Activated B cell treated with CpG ODN at 0.5 μM for 24 hours (primary cell): ENCODE measurements at regions of chr5 and their contacts with region 1.

Region 1: DNA sequence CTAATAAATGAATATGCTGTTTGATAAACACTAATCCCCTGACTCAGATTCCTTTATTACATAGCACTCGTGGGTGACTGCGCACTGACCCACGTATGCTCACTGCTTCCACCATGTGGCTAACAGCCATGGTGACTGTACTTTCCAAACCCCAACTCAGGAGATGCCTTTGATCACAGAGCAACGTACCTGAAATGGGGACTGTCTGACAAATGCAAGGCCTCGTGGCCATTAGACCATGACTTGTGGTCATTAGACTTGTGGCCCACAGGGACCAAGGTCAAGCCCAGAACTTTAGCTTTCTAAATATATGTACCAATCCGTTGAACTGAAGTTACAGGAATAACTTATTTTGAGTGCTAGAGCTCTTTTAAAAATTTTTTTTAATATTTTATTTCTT is 46.6 kb downstream of the CYFIP2 start:
- DNase-seq: no peak
- ATAC-seq: peak; percentile 77
- H3K4me3 Mint-ChIP-seq: no peak overlapping the region
- H3K27ac Mint-ChIP-seq: peak overlapping the region; percentile 77
- H3K4me1 Mint-ChIP-seq: peaks cover 35% of the 10 kb centered on the region
- H3K27me3 Mint-ChIP-seq: no peaks in the 10 kb centered on the region
- CTCF ChIP-seq: peak; percentile 42

Region 2: DNA sequence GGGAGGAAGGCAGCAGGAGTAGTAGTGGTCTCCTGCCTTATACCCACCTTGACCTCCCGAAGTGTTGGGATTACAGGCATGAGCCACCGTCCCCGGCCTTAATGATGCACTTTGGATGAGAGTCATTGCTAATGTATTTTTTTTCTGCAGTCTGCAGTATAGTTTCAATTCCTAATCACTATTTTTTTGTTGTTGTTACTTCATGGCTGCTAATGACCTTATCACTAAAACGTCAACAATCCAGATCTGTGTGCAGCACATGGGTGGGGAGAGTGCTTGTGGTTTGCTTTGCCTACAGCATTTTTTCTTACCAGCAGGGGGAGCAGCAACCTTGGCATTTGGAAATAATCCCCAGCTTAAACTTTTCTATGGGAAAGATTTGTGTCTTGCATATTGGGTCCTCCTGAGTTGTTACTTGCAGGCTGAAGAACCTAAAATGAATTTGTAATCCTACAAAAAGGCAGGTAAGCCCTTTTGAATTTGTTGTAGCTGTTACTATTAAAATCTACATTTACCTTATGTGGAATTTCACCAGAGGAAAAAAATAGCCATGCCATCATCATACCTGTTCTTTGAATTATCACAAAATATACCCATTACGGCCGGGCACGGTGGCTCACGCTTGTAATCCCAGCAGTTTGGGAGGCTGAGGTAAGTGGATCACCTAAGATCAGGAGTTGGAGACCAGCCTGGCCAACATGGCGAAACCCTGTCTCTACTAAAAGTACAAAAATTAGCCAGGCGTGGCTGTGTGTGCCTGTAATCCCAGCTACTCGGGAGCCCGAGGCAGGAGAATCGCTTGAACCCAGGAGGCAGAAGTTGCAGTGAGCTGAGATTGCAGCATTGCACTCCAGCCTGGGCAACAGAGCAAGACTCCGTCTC is 163.5 kb before region 1 on chr5:
- CTCF ChIA-PET with region 1: interaction called, 24 read pairs
- POLR2A ChIA-PET with region 1: interaction called, 16 read pairs
- intact Hi-C with region 1: loop called (anchors 1 kb)
- DNase-seq: no peak
- ATAC-seq: peak; percentile 81
- H3K4me3 Mint-ChIP-seq: no peak overlapping the region
- H3K27ac Mint-ChIP-seq: no peak overlapping the region
- H3K4me1 Mint-ChIP-seq: peaks cover 8% of the 10 kb centered on the region
- H3K27me3 Mint-ChIP-seq: no peaks in the 10 kb centered on the region
- CTCF ChIP-seq: peak; percentile 45

Region 3: DNA sequence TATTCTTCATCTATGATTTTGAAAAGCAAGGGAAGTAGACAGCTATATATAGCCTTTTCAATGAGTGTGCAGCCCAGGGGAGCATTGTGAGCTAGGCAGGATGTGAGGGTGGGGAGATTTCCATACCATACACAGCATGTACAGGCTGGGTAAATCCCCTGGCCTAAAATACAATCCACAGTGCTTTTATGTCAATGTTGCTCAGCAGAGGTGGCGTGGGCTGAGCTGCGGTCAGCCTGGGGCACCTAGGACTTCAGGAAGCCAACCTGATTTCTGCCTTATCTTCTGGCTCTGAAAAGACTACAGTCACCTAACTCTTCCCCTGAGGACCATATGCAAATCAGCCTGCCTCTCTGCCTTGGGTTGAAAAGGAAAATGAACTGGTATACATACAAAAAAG is 140.1 kb before region 1 on chr5:
- CTCF ChIA-PET with region 1: interaction called, 3 read pairs
- POLR2A ChIA-PET with region 1: interaction called, 3 read pairs
- intact Hi-C with region 1: loop called (anchors 1 kb)
- DNase-seq: peak; percentile 44
- ATAC-seq: peak; percentile 96
- H3K4me3 Mint-ChIP-seq: peak overlapping the region; percentile 62
- H3K27ac Mint-ChIP-seq: peak overlapping the region; percentile 86
- H3K4me1 Mint-ChIP-seq: peaks cover 30% of the 10 kb centered on the region
- H3K27me3 Mint-ChIP-seq: no peaks in the 10 kb centered on the region
- CTCF ChIP-seq: no peak

Region 4: GRCh38 chr5:157265714-157266285 is 46.7 kb before region 1 on chr5 and contains the start of gene CYFIP2:
- CTCF ChIA-PET with region 1: interaction called, 14 read pairs
- POLR2A ChIA-PET with region 1: interaction called, 21 read pairs
- intact Hi-C with region 1: loop called (anchors 1 kb)
- DNase-seq: peak; percentile 76
- ATAC-seq: peak; percentile 90
- H3K4me3 Mint-ChIP-seq: peak within 1 kb of the TSS; percentile 97
- H3K27ac Mint-ChIP-seq: peak within 1 kb of the TSS; percentile 99
- H3K4me1 Mint-ChIP-seq: peaks cover 69% of the 10 kb centered on the region
- H3K27me3 Mint-ChIP-seq: no peaks in the 10 kb centered on the region
- CTCF ChIP-seq: no peak
- total RNA-seq, gene CYFIP2: 385 and 471 TPM in 2 replicates

Region 5: GRCh38 chr5:157271740-157272271 is 40.7 kb before region 1 on chr5:
- CTCF ChIA-PET with region 1: interaction called, 6 read pairs
- POLR2A ChIA-PET with region 1: interaction called, 70 read pairs
- intact Hi-C with region 1: loop called (anchors 2 kb)
- DNase-seq: peak; percentile 74
- ATAC-seq: peak; percentile 86
- H3K4me3 Mint-ChIP-seq: peak overlapping the region; percentile 73
- H3K27ac Mint-ChIP-seq: peak overlapping the region; percentile 99
- H3K4me1 Mint-ChIP-seq: peaks cover 93% of the 10 kb centered on the region
- H3K27me3 Mint-ChIP-seq: no peaks in the 10 kb centered on the region
- CTCF ChIP-seq: no peak

Region 6: GRCh38 chr5:157283434-157283833 is 29.1 kb before region 1 on chr5:
- CTCF ChIA-PET with region 1: interaction called, 3 read pairs
- POLR2A ChIA-PET with region 1: no interaction called
- intact Hi-C with region 1: loop called (anchors 1 kb)
- DNase-seq: peak; percentile 40
- ATAC-seq: peak; percentile 99
- H3K4me3 Mint-ChIP-seq: peak overlapping the region; percentile 52
- H3K27ac Mint-ChIP-seq: peak overlapping the region; percentile 89
- H3K4me1 Mint-ChIP-seq: peaks cover 70% of the 10 kb centered on the region
- H3K27me3 Mint-ChIP-seq: no peaks in the 10 kb centered on the region
- CTCF ChIP-seq: no peak

Region 7: GRCh38 chr5:157328277-157328912 is 15.9 kb after region 1 on chr5:
- CTCF ChIA-PET with region 1: interaction called, 10 read pairs
- POLR2A ChIA-PET with region 1: interaction called, 3 read pairs
- intact Hi-C with region 1: no loop called
- DNase-seq: no peak
- ATAC-seq: peak; percentile 100
- H3K4me3 Mint-ChIP-seq: no peak overlapping the region
- H3K27ac Mint-ChIP-seq: peak overlapping the region; percentile 36
- H3K4me1 Mint-ChIP-seq: peaks cover 6% of the 10 kb centered on the region
- H3K27me3 Mint-ChIP-seq: no peaks in the 10 kb centered on the region
- CTCF ChIP-seq: peak; percentile 59